Naive thymus-derived CD4-positive, alpha-beta T cell (primary cell): ENCODE measurements at regions of chr2 and their contacts with region 1.

Region 1: GRCh38 chr2:134668821-134669220 is 50.0 kb downstream of the TMEM163 start:
- DNase-seq: peak; percentile 53 to 92 (median 88)
- ATAC-seq: peak; percentile 85
- H3K4me3 ChIP-seq: peak overlapping the region; percentile 4
- H3K4me3 Mint-ChIP-seq: peak overlapping the region; percentile 62 to 82 (median 68)
- H3K27ac ChIP-seq: no peak overlapping the region
- H3K27ac Mint-ChIP-seq: peak overlapping the region; percentile 74 to 96 (median 89)
- H3K4me1 ChIP-seq: peaks cover 54 to 61% of the 10 kb centered on the region in 2 donors
- H3K4me1 Mint-ChIP-seq: peaks cover 60 to 87% (median 72%) of the 10 kb centered on the region in 7 donors
- H3K27me3 ChIP-seq: no peaks in the 10 kb centered on the region
- H3K27me3 Mint-ChIP-seq: peaks cover 0 to 37% (median 4%) of the 10 kb centered on the region in 5 donors

Region 2: GRCh38 chr2:134375935-134376334 is 292.9 kb before region 1 on chr2:
- CTCF ChIA-PET with region 1: no interaction called
- POLR2A ChIA-PET with region 1: no interaction called
- intact Hi-C with region 1: no loop called
- DNase-seq: no peak
- ATAC-seq: no peak
- H3K4me3 ChIP-seq: no peak overlapping the region
- H3K4me3 Mint-ChIP-seq: no peak overlapping the region
- H3K27ac ChIP-seq: no peak overlapping the region
- H3K27ac Mint-ChIP-seq: peak overlapping the region in 1 of 9 donors; percentile 7
- H3K4me1 ChIP-seq: no peaks in the 10 kb centered on the region
- H3K4me1 Mint-ChIP-seq: peaks cover 0 to 6% (median 3%) of the 10 kb centered on the region in 7 donors
- H3K27me3 ChIP-seq: no peaks in the 10 kb centered on the region
- H3K27me3 Mint-ChIP-seq: no peaks in the 10 kb centered on the region

Region 3: GRCh38 chr2:134657637-134658250 is 11.1 kb before region 1 on chr2:
- CTCF ChIA-PET with region 1: interaction called, 3 read pairs
- POLR2A ChIA-PET with region 1: interaction called, 3 read pairs
- intact Hi-C with region 1: loop called in 1 of 2 experiments (anchors 1 kb)
- DNase-seq: peak in 2 of 9 donors; percentile 15 to 18
- ATAC-seq: no peak
- H3K4me3 ChIP-seq: no peak overlapping the region
- H3K4me3 Mint-ChIP-seq: no peak overlapping the region
- H3K27ac ChIP-seq: no peak overlapping the region
- H3K27ac Mint-ChIP-seq: no peak overlapping the region
- H3K4me1 ChIP-seq: peaks cover 0 to 7% of the 10 kb centered on the region in 2 donors
- H3K4me1 Mint-ChIP-seq: peaks cover 9 to 39% (median 26%) of the 10 kb centered on the region in 7 donors
- H3K27me3 ChIP-seq: no peaks in the 10 kb centered on the region
- H3K27me3 Mint-ChIP-seq: peaks cover 0 to 11% (median 0%) of the 10 kb centered on the region in 5 donors

Region 4: GRCh38 chr2:134692499-134692898 is 23.7 kb after region 1 on chr2:
- CTCF ChIA-PET with region 1: interaction called, 3 read pairs
- POLR2A ChIA-PET with region 1: interaction called, 5 read pairs
- intact Hi-C with region 1: loop called in 1 of 2 experiments (anchors 1 kb)
- DNase-seq: peak in 2 of 9 donors; percentile 14 to 33
- ATAC-seq: peak; percentile 60
- H3K4me3 ChIP-seq: no peak overlapping the region
- H3K4me3 Mint-ChIP-seq: no peak overlapping the region
- H3K27ac ChIP-seq: no peak overlapping the region
- H3K27ac Mint-ChIP-seq: no peak overlapping the region
- H3K4me1 ChIP-seq: no peaks in the 10 kb centered on the region
- H3K4me1 Mint-ChIP-seq: no peaks in the 10 kb centered on the region
- H3K27me3 ChIP-seq: no peaks in the 10 kb centered on the region
- H3K27me3 Mint-ChIP-seq: peaks cover 0 to 25% (median 0%) of the 10 kb centered on the region in 5 donors

Region 5: DNA sequence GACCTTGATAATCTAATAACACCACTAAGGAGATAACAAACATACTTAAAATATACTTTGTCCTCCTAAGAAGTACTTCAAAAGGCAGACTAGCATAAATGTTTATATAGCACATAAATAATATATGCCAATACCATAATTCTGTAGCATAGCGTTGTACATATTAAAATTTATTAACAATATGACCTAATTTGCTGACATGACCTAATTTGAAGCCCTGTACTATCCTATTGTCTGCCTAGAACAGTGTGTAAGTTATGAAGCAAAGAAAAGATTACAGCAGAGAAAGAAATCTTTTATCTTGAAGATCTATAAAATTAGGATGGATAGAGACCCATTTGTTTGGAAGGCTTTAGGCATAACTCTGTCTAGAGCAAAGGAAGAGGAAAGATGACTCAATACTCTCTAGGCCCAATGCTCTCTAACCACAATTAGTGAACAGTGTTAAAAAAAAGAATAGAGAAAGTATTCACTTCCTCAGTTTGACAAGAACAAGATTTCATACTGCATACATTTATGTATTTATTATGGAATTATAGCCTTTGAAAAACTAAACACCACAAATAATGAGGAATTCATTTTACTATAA is 630.9 kb after region 1 on chr2:
- CTCF ChIA-PET with region 1: no interaction called
- POLR2A ChIA-PET with region 1: no interaction called
- intact Hi-C with region 1: no loop called
- DNase-seq: no peak
- ATAC-seq: no peak
- H3K4me3 ChIP-seq: no peak overlapping the region
- H3K4me3 Mint-ChIP-seq: no peak overlapping the region
- H3K27ac ChIP-seq: no peak overlapping the region
- H3K27ac Mint-ChIP-seq: no peak overlapping the region
- H3K4me1 ChIP-seq: no peaks in the 10 kb centered on the region
- H3K4me1 Mint-ChIP-seq: peaks cover 0 to 8% (median 0%) of the 10 kb centered on the region in 7 donors
- H3K27me3 ChIP-seq: no peaks in the 10 kb centered on the region
- H3K27me3 Mint-ChIP-seq: no peaks in the 10 kb centered on the region

Region 6: DNA sequence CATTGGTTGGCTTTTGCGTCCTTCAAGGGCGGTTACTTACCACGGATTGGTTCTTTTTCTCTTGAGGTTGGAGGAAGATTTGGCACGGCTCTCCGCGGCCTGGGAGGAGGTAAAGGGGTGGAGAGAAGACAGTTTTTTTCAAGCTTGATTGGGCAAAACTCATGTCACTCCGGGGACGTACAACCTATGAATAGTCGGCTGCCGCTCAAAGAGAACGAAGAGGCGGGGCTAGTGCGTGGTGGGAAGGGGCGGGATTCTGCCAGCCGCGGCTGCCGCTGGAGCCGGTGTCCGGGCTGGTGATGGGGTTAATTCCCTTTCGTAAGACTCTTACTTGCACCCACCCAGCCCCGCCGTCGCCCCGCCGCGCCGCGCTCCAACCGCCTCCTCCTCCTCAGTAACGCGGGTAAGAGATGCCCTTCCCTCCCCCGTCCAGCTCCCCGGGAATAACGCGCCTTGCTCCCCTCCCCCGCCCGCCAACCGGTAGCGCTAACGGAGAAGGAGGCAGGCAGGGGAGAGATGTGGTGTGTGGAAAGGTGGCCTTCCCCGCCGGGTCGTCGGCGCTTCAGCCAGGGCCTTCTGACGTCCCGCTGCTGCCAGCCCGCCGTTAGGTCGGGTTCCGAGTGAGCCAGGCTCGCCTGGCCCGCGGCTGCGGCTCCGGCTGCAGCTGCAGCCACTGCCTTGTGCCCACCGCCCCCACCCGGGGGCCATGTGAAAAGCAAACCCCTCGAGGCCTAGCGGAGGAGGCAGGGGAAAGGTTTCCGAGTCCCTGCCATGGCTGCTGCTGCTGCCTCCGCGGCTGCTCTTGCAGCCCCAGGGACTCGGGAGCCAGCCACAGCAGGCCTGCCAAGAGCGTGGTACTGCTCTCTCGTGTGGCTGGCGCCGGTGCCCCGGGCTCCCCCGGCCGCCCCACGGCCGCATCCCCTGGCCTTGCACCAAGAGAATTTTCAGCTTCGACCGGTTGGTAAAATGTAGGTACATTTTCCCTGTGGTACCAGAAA is 862.7 kb after region 1 on chr2 and contains the start of gene R3HDM1:
- CTCF ChIA-PET with region 1: no interaction called
- POLR2A ChIA-PET with region 1: no interaction called
- intact Hi-C with region 1: loop called in 1 of 2 experiments (anchors 2 kb)
- DNase-seq: peak in 8 of 9 donors; percentile 71 to 99 (median 98)
- ATAC-seq: peak; percentile 89
- H3K4me3 ChIP-seq: peak within 1 kb of the TSS; percentile 83
- H3K4me3 Mint-ChIP-seq: no peak within 1 kb of the TSS
- H3K27ac ChIP-seq: peak within 1 kb of the TSS; percentile 84
- H3K27ac Mint-ChIP-seq: peak within 1 kb of the TSS in 7 of 9 donors; percentile 36 to 81 (median 67)
- H3K4me1 ChIP-seq: peaks cover 4 to 21% of the 10 kb centered on the region in 2 donors
- H3K4me1 Mint-ChIP-seq: peaks cover 10 to 39% (median 34%) of the 10 kb centered on the region in 7 donors
- H3K27me3 ChIP-seq: no peaks in the 10 kb centered on the region
- H3K27me3 Mint-ChIP-seq: no peaks in the 10 kb centered on the region
- total RNA-seq, gene R3HDM1: 35.0 to 58.2 (median 47.0) TPM

Region 7: GRCh38 chr2:135876066-135876711 is 1207.4 kb after region 1 on chr2 and contains the start of gene MCM6:
- CTCF ChIA-PET with region 1: no interaction called
- POLR2A ChIA-PET with region 1: no interaction called
- intact Hi-C with region 1: loop called in 1 of 2 experiments (anchors 1 kb)
- DNase-seq: peak; percentile 91 to 99 (median 97)
- ATAC-seq: peak; percentile 96
- H3K4me3 ChIP-seq: peak within 1 kb of the TSS; percentile 83
- H3K4me3 Mint-ChIP-seq: peak within 1 kb of the TSS; percentile 85 to 97 (median 93)
- H3K27ac ChIP-seq: peak within 1 kb of the TSS; percentile 84
- H3K27ac Mint-ChIP-seq: peak within 1 kb of the TSS; percentile 84 to 97 (median 95)
- H3K4me1 ChIP-seq: peaks cover 12 to 18% of the 10 kb centered on the region in 2 donors
- H3K4me1 Mint-ChIP-seq: peaks cover 23 to 44% (median 41%) of the 10 kb centered on the region in 7 donors
- H3K27me3 ChIP-seq: no peaks in the 10 kb centered on the region
- H3K27me3 Mint-ChIP-seq: peaks cover 0 to 5% (median 0%) of the 10 kb centered on the region in 5 donors
- total RNA-seq, gene MCM6: 12.1 to 105 (median 21.6) TPM